HEK293 (cell line): ENCODE measurements at regions of chr19 and their contacts with region 1.

Region 1: GRCh38 chr19:49224856-49225255 is 67.3 kb downstream of the TRPM4 start:
- H3K4me3 ChIP-seq: no peak overlapping the region
- H3K27ac ChIP-seq: no peak overlapping the region
- H3K4me1 ChIP-seq: no peaks in the 10 kb centered on the region
- CTCF ChIP-seq: peak; percentile 74

Region 2: GRCh38 chr19:49073514-49074378 is 151.1 kb before region 1 on chr19:
- CTCF ChIA-PET with region 1: interaction called, 26 read pairs
- POLR2A ChIA-PET with region 1: no interaction called
- H3K4me3 ChIP-seq: no peak overlapping the region
- H3K27ac ChIP-seq: no peak overlapping the region
- H3K4me1 ChIP-seq: no peaks in the 10 kb centered on the region
- CTCF ChIP-seq: peak; percentile 66

Region 3: GRCh38 chr19:49106648-49107135 is 118.2 kb before region 1 on chr19:
- CTCF ChIA-PET with region 1: interaction called, 12 read pairs
- POLR2A ChIA-PET with region 1: no interaction called
- H3K4me3 ChIP-seq: no peak overlapping the region
- H3K27ac ChIP-seq: no peak overlapping the region; the same call in 1 of the 2 replicates
- H3K4me1 ChIP-seq: no peaks in the 10 kb centered on the region
- CTCF ChIP-seq: peak; percentile 81

Region 4: DNA sequence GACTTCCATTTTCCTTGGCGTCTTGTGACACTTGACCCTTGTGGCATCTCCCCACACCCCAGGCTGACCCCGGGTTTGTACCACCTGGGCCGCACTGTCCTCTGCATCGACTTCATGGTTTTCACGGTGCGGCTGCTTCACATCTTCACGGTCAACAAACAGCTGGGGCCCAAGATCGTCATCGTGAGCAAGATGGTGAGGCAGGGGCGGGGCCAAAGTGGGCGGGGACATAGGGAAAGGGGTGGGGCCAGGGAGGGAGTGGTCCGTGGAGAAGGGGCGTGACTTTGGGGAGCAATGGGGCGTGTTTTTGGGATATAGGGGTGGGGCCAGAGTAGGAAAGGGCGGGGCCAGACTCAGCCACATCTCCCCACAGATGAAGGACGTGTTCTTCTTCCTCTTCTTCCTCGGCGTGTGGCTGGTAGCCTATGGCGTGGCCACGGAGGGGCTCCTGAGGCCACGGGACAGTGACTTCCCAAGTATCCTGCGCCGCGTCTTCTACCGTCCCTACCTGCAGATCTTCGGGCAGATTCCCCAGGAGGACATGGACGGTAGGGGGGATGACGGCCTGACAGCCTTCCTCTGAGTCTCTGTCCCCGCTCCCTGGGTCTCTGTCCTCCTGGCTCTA is 24.5 kb before region 1 on chr19:
- CTCF ChIA-PET with region 1: interaction called, 43 read pairs
- POLR2A ChIA-PET with region 1: no interaction called
- H3K4me3 ChIP-seq: no peak overlapping the region
- H3K27ac ChIP-seq: no peak overlapping the region
- H3K4me1 ChIP-seq: no peaks in the 10 kb centered on the region
- CTCF ChIP-seq: no peak

Region 5: GRCh38 chr19:49243129-49243528 is 18.3 kb after region 1 on chr19:
- CTCF ChIA-PET with region 1: interaction called, 37 read pairs
- POLR2A ChIA-PET with region 1: no interaction called
- H3K4me3 ChIP-seq: no peak overlapping the region
- H3K27ac ChIP-seq: no peak overlapping the region
- H3K4me1 ChIP-seq: no peaks in the 10 kb centered on the region; the same call in 1 of the 2 replicates
- CTCF ChIP-seq: no peak

Region 6: GRCh38 chr19:49272184-49272583 is 47.3 kb after region 1 on chr19:
- CTCF ChIA-PET with region 1: interaction called, 12 read pairs
- POLR2A ChIA-PET with region 1: no interaction called
- H3K4me3 ChIP-seq: no peak overlapping the region
- H3K27ac ChIP-seq: no peak overlapping the region
- H3K4me1 ChIP-seq: peaks cover 4% of the 10 kb centered on the region; the same call in 1 of the 2 replicates
- CTCF ChIP-seq: no peak

Region 7: DNA sequence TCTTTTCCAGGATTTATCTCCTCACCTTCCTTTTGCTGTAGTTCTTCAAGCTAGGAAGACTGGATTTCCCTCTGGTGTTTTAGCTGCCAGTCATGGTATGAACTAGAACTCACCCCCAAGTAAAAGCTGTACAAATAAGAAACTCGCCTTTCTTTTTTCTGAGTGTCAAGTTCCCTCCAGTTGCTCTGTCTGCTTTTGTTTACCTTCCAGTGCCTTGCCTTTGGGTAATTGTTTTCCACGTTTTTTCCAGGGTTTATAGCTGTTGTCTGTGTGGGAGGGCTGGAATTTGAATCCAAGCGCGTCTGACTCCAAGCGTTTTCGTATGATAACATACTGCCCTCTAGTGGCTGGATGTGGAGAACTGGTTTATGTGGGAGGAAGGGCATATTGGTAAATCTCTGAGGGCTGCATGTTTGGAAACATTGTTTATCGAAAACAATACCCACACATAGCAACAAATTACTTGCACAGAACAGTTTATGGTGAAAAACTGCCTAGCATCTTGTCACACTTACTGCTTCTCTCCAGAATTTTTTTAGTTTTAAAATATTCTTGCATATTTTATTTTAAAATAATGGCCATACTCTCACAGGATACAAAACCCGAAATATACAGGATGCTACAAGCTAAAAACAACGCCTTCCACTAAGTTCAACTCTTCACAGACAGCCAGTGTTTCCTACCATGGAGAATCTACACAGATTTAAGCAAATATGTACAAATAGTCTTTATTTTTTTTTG is 322.1 kb after region 1 on chr19:
- CTCF ChIA-PET with region 1: interaction called, 17 read pairs
- POLR2A ChIA-PET with region 1: no interaction called
- H3K4me3 ChIP-seq: no peak overlapping the region
- H3K27ac ChIP-seq: peak overlapping the region; percentile 54
- H3K4me1 ChIP-seq: peaks cover 9% of the 10 kb centered on the region
- CTCF ChIP-seq: peak; percentile 68